Naive thymus-derived CD4-positive, alpha-beta T cell (primary cell): ENCODE measurements at regions of chr6 and their contacts with region 1.

Region 1: DNA sequence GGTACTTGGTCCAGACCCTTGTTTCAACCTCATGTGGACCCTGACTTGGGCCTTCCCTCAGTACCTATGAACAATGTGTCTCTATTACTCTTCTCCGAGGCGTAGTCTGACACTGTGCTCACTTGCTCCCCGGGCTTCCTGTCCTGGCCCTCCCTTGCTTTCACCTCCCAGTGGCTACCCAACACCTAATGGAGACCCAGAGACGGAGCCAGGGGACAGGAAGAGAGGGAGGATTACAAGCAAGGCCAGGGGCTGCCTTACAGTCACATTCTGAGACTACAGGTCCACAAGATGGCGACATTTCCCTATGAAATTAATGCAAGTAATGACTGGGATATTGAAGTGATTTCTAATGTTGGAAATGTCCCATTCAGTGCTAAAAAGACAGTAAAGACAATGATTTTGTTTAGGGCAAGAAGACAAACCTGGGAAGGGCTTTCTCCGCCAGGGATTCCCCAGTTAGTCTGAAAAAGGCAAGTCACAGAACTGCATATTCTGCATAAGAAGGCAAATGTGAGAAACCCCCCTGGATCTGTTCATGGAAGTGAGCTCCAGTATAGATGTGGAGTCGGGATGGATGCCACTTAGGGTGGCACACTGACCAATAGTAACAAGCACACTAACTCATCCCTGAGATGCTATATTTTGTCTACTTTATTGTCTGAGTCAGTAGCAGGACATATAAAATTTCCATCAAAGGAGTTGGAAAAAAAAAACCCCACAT is 44.0 kb upstream of the ZBTB24 start:
- DNase-seq: peak; percentile 7 to 70 (median 59)
- ATAC-seq: peak; percentile 79
- H3K4me3 ChIP-seq: no peak overlapping the region
- H3K4me3 Mint-ChIP-seq: no peak overlapping the region
- H3K27ac ChIP-seq: no peak overlapping the region
- H3K27ac Mint-ChIP-seq: peak overlapping the region in 1 of 9 donors; percentile 86
- H3K4me1 ChIP-seq: no peaks in the 10 kb centered on the region
- H3K4me1 Mint-ChIP-seq: peaks cover 0 to 4% (median 0%) of the 10 kb centered on the region in 7 donors
- H3K27me3 ChIP-seq: no peaks in the 10 kb centered on the region
- H3K27me3 Mint-ChIP-seq: peaks cover 0 to 6% (median 0%) of the 10 kb centered on the region in 5 donors

Region 2: DNA sequence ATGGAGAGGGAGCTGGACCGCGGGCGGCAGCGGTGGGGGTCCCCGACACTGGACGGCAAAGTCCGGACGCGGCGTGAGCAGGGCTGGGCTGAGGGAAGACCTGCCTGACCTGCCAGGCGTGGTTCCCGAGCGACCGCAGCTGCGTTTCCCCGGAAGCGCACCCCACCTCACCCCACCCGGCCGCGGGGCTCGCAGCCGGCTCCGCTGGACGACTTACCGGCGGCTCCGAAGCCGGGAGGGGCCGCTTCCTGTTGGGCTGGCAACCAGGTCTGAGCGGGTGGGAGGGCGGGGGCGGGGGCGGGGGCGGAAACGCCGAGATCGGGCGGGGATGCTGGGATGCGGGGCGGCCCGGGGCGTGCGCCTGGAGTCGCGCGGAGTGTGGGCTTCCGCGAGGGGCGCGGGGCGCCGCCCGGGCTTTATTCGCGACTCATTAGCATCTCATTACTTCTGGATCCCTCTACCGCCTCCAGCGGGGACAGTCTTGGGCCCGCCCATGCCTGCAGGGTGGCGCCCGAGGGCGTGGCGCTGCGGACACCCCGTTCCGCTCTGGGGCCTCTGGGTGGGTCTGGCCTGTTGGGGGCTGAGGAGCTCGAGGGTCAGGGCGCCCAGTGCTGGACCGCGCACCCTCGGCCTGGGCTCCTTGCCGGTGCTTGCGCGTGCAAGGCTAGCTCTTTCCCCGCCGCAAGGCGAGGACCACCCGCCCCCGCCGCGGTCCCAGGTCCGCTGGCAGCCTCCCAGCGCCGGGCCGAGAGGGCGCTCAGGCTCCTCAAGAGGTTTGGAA is 71.4 kb before region 1 on chr6 and contains the start of gene MICAL1:
- CTCF ChIA-PET with region 1: no interaction called
- POLR2A ChIA-PET with region 1: no interaction called
- intact Hi-C with region 1: loop called in 1 of 2 experiments (anchors 2 kb)
- DNase-seq: peak; percentile 55 to 79 (median 72)
- ATAC-seq: peak; percentile 82
- H3K4me3 ChIP-seq: peak within 1 kb of the TSS; percentile 81
- H3K4me3 Mint-ChIP-seq: peak within 1 kb of the TSS; percentile 95 to 99 (median 97)
- H3K27ac ChIP-seq: peak within 1 kb of the TSS; percentile 94
- H3K27ac Mint-ChIP-seq: peak within 1 kb of the TSS; percentile 83 to 99 (median 97)
- H3K4me1 ChIP-seq: peaks cover 40 to 45% of the 10 kb centered on the region in 2 donors
- H3K4me1 Mint-ChIP-seq: peaks cover 29 to 68% (median 62%) of the 10 kb centered on the region in 7 donors
- H3K27me3 ChIP-seq: no peaks in the 10 kb centered on the region
- H3K27me3 Mint-ChIP-seq: no peaks in the 10 kb centered on the region
- total RNA-seq, gene MICAL1: 61.4 to 125 (median 78.7) TPM

Region 3: DNA sequence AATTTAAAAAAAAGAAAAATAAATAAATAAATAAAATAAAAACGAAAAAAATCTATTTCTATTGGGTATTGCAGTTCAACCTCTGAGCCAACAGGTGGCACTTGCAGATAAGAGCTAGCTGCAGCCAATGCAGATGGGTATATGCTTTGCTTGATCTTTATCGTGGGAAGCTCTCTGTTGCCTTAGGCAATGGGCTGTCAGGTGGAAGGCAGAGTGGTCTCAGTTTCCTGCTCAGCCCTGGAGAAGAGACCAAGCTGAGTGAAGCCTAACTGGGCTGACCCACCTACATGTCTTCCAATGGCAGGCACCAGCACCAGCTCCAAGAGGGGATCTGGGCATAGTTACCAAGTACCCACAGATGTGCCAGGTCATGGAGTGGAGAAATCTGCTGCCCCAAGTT is 68.9 kb after region 1 on chr6:
- CTCF ChIA-PET with region 1: no interaction called
- POLR2A ChIA-PET with region 1: no interaction called
- intact Hi-C with region 1: no loop called
- DNase-seq: peak in 5 of 9 donors; percentile 26 to 45 (median 35)
- ATAC-seq: peak; percentile 44
- H3K4me3 ChIP-seq: no peak overlapping the region
- H3K4me3 Mint-ChIP-seq: no peak overlapping the region
- H3K27ac ChIP-seq: no peak overlapping the region
- H3K27ac Mint-ChIP-seq: no peak overlapping the region
- H3K4me1 ChIP-seq: no peaks in the 10 kb centered on the region
- H3K4me1 Mint-ChIP-seq: peaks cover 2 to 13% (median 5%) of the 10 kb centered on the region in 7 donors
- H3K27me3 ChIP-seq: no peaks in the 10 kb centered on the region
- H3K27me3 Mint-ChIP-seq: no peaks in the 10 kb centered on the region

Region 4: GRCh38 chr6:109705258-109705657 is 178.2 kb after region 1 on chr6:
- CTCF ChIA-PET with region 1: interaction called, 3 read pairs
- POLR2A ChIA-PET with region 1: no interaction called
- intact Hi-C with region 1: loop called (anchors 1 to 5 kb)
- DNase-seq: peak; percentile 46 to 74 (median 61)
- ATAC-seq: peak; percentile 99
- H3K4me3 ChIP-seq: no peak overlapping the region
- H3K4me3 Mint-ChIP-seq: no peak overlapping the region
- H3K27ac ChIP-seq: no peak overlapping the region
- H3K27ac Mint-ChIP-seq: no peak overlapping the region
- H3K4me1 ChIP-seq: no peaks in the 10 kb centered on the region
- H3K4me1 Mint-ChIP-seq: peaks cover 7 to 62% (median 38%) of the 10 kb centered on the region in 7 donors
- H3K27me3 ChIP-seq: no peaks in the 10 kb centered on the region
- H3K27me3 Mint-ChIP-seq: no peaks in the 10 kb centered on the region

Region 5: GRCh38 chr6:109783250-109783986 is 256.4 kb after region 1 on chr6:
- CTCF ChIA-PET with region 1: no interaction called
- POLR2A ChIA-PET with region 1: no interaction called
- intact Hi-C with region 1: loop called in 1 of 2 experiments (anchors 2 kb)
- DNase-seq: peak in 1 of 9 donors; percentile 3
- ATAC-seq: no peak
- H3K4me3 ChIP-seq: no peak overlapping the region
- H3K4me3 Mint-ChIP-seq: no peak overlapping the region
- H3K27ac ChIP-seq: no peak overlapping the region
- H3K27ac Mint-ChIP-seq: no peak overlapping the region
- H3K4me1 ChIP-seq: no peaks in the 10 kb centered on the region
- H3K4me1 Mint-ChIP-seq: peaks cover 0 to 5% (median 0%) of the 10 kb centered on the region in 7 donors
- H3K27me3 ChIP-seq: no peaks in the 10 kb centered on the region
- H3K27me3 Mint-ChIP-seq: no peaks in the 10 kb centered on the region

Region 6: DNA sequence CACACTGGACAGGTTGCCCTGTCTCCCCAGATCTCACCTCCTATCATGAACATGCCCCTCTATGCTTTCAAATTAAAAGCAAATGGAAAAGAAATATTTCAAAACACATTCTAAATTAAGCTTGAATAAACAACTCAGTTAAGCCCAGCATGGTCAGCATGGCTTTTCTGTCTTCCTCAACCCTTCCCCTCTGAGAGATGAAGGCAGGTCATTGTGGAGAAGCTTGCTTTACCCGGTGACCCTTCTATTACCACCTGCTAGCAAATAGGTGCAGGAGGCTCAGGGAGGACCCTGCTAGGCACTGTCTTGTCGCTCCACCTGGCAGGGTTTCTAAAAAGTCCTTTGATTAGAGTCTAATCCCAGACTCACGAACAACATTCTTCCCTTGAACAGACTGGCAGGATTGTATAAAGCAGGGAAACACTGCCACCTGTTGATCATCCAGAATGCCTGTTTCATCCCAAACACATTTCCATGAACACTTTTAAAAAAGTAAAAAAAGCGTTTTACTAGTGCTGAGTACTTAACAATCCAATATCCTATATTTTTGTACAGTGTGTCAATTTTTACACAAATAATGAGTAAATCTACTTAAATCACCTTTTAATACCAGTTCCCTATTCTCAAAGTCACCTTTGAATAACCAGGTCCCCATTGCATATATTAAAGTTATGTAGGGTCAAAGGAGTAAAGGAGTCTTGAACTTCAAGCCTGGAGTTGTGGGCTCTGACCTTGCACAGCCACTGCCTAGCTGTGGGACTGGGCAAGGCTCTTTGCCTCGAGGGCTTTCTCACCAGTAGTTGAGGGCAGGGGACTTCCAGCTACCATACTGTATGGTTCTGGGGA is 526.6 kb after region 1 on chr6:
- CTCF ChIA-PET with region 1: no interaction called
- POLR2A ChIA-PET with region 1: no interaction called
- intact Hi-C with region 1: loop called in 1 of 2 experiments (anchors 1 kb)
- DNase-seq: peak in 4 of 9 donors; percentile 9 to 27 (median 14)
- ATAC-seq: peak; percentile 45
- H3K4me3 ChIP-seq: no peak overlapping the region
- H3K4me3 Mint-ChIP-seq: no peak overlapping the region
- H3K27ac ChIP-seq: no peak overlapping the region
- H3K27ac Mint-ChIP-seq: no peak overlapping the region
- H3K4me1 ChIP-seq: no peaks in the 10 kb centered on the region
- H3K4me1 Mint-ChIP-seq: no peaks in the 10 kb centered on the region
- H3K27me3 ChIP-seq: no peaks in the 10 kb centered on the region
- H3K27me3 Mint-ChIP-seq: peaks cover 0 to 25% (median 16%) of the 10 kb centered on the region in 5 donors

Region 7: DNA sequence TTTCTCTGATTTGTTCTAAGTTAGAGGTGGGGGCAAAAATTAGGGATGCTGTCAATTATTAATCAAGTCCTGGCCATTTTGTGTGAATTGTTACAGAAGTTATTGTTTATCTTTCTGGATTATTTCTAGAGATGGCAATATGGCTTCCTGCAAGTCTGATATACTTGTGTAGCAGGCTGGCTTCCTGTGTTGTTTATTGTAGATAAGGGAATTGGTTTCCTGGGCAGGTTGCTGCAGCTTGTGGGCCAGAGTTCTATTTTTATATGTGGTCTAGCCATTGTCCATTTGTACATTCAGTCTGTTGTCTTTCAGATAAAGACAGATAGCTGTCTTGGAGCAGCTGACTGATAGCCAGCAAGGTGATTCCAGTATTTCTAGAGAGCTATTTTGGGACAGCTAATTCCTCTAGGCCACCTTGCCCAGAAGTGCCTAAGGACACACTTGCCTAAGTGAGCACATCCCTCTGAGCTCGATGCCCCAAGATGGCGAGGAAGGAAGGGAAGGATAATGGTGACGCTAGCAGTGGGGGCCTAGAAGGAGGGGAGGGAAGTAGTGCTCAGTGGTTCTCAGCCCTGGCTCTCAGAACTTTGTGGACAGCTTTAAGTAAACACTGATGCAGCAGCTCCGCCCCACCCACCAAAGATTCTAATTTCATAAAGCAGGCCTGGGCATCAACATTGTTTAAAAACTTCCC is 862.8 kb after region 1 on chr6:
- CTCF ChIA-PET with region 1: interaction called, 4 read pairs
- POLR2A ChIA-PET with region 1: no interaction called
- intact Hi-C with region 1: loop called (anchors 1 kb)
- DNase-seq: no peak
- ATAC-seq: peak; percentile 67
- H3K4me3 ChIP-seq: no peak overlapping the region
- H3K4me3 Mint-ChIP-seq: peak overlapping the region in 1 of 10 donors; percentile 32
- H3K27ac ChIP-seq: no peak overlapping the region
- H3K27ac Mint-ChIP-seq: peak overlapping the region in 6 of 9 donors; percentile 7 to 85 (median 54)
- H3K4me1 ChIP-seq: peaks cover 0 to 3% of the 10 kb centered on the region in 2 donors
- H3K4me1 Mint-ChIP-seq: peaks cover 9 to 27% (median 23%) of the 10 kb centered on the region in 7 donors
- H3K27me3 ChIP-seq: no peaks in the 10 kb centered on the region
- H3K27me3 Mint-ChIP-seq: no peaks in the 10 kb centered on the region

Region 8: DNA sequence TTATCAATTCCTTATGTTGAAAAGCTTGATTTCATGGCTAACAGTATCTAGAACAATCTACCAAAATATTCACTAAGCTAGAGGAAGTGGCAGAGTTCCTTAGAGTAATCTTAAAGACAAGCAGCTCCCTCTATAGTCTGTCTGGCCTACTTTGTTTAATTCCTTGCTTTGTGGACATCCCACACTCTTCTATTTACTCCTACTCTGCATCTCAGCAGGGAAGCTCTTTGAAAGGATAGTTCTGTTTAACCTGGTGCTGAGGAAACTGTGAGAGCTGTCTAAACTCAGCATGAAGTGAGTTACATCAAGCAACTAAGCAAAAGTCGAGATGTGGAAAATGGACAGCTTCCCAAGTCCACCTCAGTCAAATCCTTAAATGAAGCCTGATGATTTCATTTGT is 1951.7 kb after region 1 on chr6:
- CTCF ChIA-PET with region 1: no interaction called
- POLR2A ChIA-PET with region 1: no interaction called
- intact Hi-C with region 1: no loop called
- DNase-seq: peak in 7 of 9 donors; percentile 23 to 61 (median 44)
- ATAC-seq: peak; percentile 21
- H3K4me3 ChIP-seq: no peak overlapping the region
- H3K4me3 Mint-ChIP-seq: peak overlapping the region in 1 of 10 donors; percentile 26
- H3K27ac ChIP-seq: peak overlapping the region; percentile 24
- H3K27ac Mint-ChIP-seq: peak overlapping the region in 7 of 9 donors; percentile 31 to 77 (median 62)
- H3K4me1 ChIP-seq: peaks cover 13 to 14% of the 10 kb centered on the region in 2 donors
- H3K4me1 Mint-ChIP-seq: peaks cover 28 to 57% (median 50%) of the 10 kb centered on the region in 7 donors
- H3K27me3 ChIP-seq: no peaks in the 10 kb centered on the region
- H3K27me3 Mint-ChIP-seq: no peaks in the 10 kb centered on the region